ENCODE measurements at regions of chr2 and their contacts with region 1.

Region 1: DNA sequence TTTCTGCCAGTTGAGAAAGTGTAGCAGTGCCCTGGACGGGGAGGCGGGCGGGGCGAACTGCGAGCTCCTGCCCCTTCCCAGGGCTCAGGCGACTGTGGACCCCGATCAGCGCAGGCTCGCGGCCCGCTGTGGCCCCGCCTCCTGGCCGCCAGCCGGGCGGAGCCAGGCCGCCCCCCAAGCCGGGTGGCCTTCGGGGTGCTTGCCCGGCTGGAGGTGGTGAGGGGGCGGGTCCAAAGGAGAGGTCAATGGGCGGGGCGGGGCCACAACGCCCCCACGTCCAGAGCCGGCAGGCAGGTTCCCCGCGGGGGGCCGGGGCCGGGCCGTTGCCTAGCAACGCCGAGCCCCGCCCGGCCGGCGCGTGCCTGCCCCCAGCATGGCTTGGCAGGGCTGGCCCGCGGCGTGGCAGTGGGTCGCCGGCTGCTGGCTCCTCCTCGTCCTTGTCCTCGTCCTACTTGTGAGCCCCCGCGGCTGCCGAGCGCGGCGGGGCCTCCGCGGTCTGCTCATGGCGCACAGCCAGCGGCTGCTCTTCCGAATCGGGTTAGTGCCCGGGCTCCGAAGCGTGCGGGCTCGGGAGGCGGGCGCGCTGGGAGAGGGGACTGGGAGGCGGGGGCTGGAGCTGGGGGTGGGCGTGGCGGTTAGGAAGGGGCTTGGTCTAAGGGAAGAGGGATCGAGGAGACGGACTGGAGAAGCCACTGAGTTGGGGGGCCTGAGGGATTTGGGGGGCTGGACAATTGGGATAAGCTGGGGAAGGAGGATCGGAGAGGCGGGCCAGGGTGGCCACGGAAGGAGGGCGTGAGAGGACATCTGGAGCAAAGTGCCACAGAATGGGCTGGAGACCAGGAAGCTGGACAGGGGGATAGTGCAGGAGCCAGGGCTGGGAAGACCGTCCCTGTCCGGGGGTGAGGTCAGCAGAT is 30.8 kb upstream of the TMBIM1 start:
- DNase-seq: peak; percentile 91
- H3K4me3 ChIP-seq: peak overlapping the region; percentile 79 to 94 (median 82)
- H3K27ac ChIP-seq: peak overlapping the region; percentile 67 to 83 (median 76)
- H3K4me1 ChIP-seq: peaks cover 17 to 31% (median 26%) of the 10 kb centered on the region in 4 donors
- H3K27me3 ChIP-seq: no peaks in the 10 kb centered on the region
- CTCF ChIP-seq: no peak
- EP300 ChIP-seq: no peak
- POLR2A ChIP-seq: no peak

Region 2: DNA sequence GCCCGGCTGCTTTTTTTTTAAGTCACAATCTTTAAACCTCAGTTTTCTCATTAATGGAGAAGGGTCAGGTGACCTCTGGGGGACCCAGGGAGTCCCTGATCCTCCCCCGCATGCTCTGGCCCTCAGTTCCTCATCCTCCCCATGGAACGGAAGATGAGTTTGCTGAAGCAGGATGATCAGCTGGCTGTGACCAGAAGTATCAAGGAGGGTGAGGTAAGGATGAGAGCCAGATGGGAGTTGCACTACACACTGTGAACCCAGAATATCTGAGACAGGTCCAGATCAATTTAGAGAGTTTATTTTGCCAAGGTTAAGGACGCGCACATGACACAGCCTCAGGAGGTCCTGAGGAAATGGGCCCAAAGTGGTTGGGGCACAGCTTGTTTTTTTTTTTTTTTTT is 37.3 kb after region 1 on chr2:
- intact Hi-C with region 1: loop called (anchors 5 kb)
- DNase-seq: no peak
- H3K4me3 ChIP-seq: no peak overlapping the region
- H3K27ac ChIP-seq: no peak overlapping the region
- H3K4me1 ChIP-seq: peaks cover 0 to 10% (median 8%) of the 10 kb centered on the region in 4 donors
- H3K27me3 ChIP-seq: no peaks in the 10 kb centered on the region
- CTCF ChIP-seq: no peak
- EP300 ChIP-seq: no peak
- POLR2A ChIP-seq: no peak